GM10248 (cell line): ENCODE measurements at regions of chr7 and their contacts with region 1.

Region 1: GRCh38 chr7:135634191-135634878 is 28.0 kb upstream of the STMP1 start:
- DNase-seq: no peak
- CTCF ChIP-seq: no peak

Region 2: GRCh38 chr7:135616136-135616535 is 18.2 kb before region 1 on chr7:
- CTCF ChIA-PET with region 1: interaction called, 17 read pairs
- POLR2A ChIA-PET with region 1: no interaction called
- DNase-seq: no peak
- CTCF ChIP-seq: no peak

Region 3: DNA sequence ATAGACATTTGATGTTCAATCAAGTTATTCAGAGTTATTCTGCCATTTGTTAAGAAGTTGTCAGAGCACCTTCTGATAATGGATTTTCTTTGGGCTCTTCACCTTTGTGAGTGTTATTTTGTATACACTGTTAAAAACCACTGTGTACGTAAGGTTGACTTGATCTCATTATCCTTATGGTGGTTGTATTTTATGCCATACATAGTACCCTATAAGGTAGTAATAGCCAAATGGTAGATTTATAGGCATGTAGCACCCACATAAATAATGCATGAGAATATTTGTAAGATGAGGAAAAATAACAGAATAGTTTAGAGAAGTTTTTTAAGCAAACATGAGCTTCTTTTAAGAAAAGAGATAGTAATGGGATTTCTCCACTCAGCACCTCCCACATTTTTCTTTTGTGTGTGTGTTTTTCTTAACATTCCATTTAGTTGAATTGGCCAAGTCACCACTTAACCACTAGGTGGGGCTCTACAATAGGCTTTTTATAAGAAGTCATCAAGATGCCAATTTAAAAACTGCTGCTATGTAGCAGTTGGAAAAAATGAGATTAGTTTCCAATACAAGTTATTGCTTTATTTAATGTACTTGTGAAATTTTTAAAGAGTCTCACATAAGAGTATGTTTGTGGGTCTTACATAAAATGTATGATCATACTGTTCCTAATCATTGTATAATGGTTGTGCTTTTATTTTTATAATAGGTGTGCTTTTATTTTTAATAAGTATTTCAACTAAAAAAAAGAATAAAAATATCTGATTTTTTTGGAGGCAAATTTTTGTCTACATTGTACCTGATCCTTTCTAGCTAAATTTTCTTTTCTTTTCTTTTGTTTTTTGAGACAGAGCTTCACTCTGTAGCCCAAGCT is 13.1 kb before region 1 on chr7:
- CTCF ChIA-PET with region 1: interaction called, 17 read pairs
- POLR2A ChIA-PET with region 1: no interaction called
- DNase-seq: peak; percentile 35
- CTCF ChIP-seq: peak; percentile 78